SK-N-SH (cell line): ENCODE measurements at regions of chr5 and their contacts with region 1.

Region 1: DNA sequence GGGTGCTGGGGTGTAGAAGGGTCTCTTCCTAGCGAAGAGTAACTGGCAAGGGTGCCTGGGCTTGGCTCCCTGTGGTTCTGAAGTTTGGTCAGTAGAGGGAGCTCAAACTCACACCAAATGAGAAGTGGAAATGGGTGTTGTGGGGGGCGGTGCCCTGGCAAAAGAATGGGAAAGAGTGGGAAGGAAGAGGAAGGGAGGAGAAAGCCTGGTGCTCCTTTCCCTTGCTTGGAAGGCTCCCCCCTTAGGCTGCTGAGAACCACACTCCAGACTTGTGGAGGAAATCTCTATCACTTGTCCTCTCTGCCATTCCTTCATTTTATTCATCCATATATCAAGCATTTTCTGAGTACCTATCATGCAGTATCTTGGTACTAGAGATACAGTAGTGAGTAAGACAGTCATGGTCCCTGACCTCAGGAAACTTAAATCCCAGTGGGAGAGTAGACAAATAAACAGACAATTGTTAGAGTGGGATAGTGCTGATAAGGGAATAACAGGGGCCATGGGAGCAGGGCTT is 13.0 kb downstream of the SLC4A9 start:
- DNase-seq: peak; percentile 79
- H3K4me3 ChIP-seq: no peak overlapping the region; a peak in 1 of 4 replicates
- H3K27ac ChIP-seq: no peak overlapping the region
- H3K4me1 ChIP-seq: no peaks in the 10 kb centered on the region; a peak in 1 of 4 replicates
- H3K27me3 ChIP-seq: no peaks in the 10 kb centered on the region
- CTCF ChIP-seq: peak; percentile 78
- EP300 ChIP-seq: no peak
- RAD21 ChIP-seq: peak; percentile 83

Region 2: DNA sequence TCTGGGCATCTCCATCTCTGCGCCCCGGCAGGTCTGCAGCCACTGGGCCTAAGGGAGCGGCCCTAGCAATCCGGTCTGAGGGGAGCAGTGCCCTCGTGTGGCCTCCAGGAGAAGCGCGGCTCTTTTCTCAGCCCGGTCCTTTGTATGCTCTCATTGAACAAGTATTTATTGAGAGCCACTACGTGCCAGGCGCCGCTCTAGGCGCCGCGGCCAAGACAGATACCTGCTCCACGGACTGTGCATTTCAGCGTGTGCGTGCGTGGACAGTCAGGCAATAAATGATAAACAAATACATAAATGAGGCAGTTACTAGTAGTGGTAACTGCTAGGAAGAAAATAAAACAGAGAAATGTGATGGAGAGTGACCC is 15.3 kb before region 1 on chr5:
- CTCF ChIA-PET with region 1: interaction called, 21 read pairs
- POLR2A ChIA-PET with region 1: no interaction called
- DNase-seq: peak; percentile 92
- H3K4me3 ChIP-seq: peak overlapping the region in 1 of 2 experiments; percentile 9; a peak in 2 of 4 replicates
- H3K27ac ChIP-seq: no peak overlapping the region
- H3K4me1 ChIP-seq: peaks cover 0 to 4% of the 10 kb centered on the region in 2 experiments; a peak in 1 of 4 replicates
- H3K27me3 ChIP-seq: no peaks in the 10 kb centered on the region
- CTCF ChIP-seq: peak; percentile 91
- EP300 ChIP-seq: no peak
- RAD21 ChIP-seq: peak; percentile 77

Region 3: GRCh38 chr5:140388052-140388451 is 15.0 kb after region 1 on chr5:
- CTCF ChIA-PET with region 1: interaction called, 14 read pairs
- POLR2A ChIA-PET with region 1: interaction called, 3 read pairs
- DNase-seq: no peak
- H3K4me3 ChIP-seq: no peak overlapping the region
- H3K27ac ChIP-seq: no peak overlapping the region
- H3K4me1 ChIP-seq: no peaks in the 10 kb centered on the region
- H3K27me3 ChIP-seq: no peaks in the 10 kb centered on the region
- CTCF ChIP-seq: no peak
- EP300 ChIP-seq: no peak
- RAD21 ChIP-seq: no peak

Region 4: DNA sequence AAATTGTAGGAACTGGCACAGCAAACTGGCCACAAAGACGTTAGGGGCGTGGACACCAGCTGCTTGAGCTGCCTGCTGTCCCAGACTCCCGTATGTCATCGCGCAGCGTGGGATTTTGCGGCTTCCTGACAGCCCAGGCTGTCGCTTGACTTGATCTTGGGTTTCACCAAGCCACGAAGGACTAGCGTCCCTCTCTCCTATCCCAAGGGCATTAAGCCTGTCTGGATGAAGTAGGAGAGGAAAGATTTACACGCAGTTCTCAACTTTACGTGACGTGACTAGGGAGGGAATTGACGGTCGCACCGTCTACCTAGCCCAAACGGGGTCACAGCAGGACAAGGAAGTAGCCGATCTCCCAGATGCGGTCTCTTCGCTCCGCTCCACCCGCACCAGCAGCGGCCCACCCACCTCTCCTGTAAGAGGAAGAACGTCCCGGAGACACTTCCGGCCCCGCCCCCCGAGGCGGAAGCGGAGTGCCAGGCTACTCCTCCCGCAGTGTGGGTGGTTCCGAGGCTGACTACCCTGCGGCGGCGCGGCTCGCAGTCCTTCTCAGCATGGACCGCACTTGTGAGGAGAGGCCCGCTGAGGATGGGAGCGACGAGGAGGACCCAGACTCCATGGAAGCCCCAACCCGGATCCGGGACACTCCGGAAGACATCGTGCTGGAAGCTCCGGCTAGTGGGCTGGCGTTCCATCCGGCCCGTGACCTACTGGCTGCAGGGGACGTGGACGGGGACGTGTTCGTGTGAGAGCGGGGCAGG is 291.5 kb after region 1 on chr5 and contains the start of gene WDR55:
- CTCF ChIA-PET with region 1: interaction called, 10 read pairs
- POLR2A ChIA-PET with region 1: no interaction called
- DNase-seq: peak; percentile 96
- H3K4me3 ChIP-seq: peak within 1 kb of the TSS; percentile 78 to 88
- H3K27ac ChIP-seq: peak within 1 kb of the TSS; percentile 89 to 94
- H3K4me1 ChIP-seq: peaks cover 0 to 4% of the 10 kb centered on the region in 2 experiments; a peak in 2 of 4 replicates
- H3K27me3 ChIP-seq: no peaks in the 10 kb centered on the region
- CTCF ChIP-seq: no peak
- EP300 ChIP-seq: no peak
- RAD21 ChIP-seq: no peak
- polyA plus RNA-seq, gene WDR55: 28.3 and 32.7 TPM in 2 replicates

Region 5: GRCh38 chr5:140718241-140718580 is 345.2 kb after region 1 on chr5:
- CTCF ChIA-PET with region 1: interaction called, 20 read pairs
- POLR2A ChIA-PET with region 1: no interaction called
- DNase-seq: no peak
- H3K4me3 ChIP-seq: no peak overlapping the region
- H3K27ac ChIP-seq: peak overlapping the region in 1 of 2 experiments; percentile 39; a peak in 1 of 4 replicates
- H3K4me1 ChIP-seq: no peaks in the 10 kb centered on the region
- H3K27me3 ChIP-seq: no peaks in the 10 kb centered on the region
- CTCF ChIP-seq: no peak
- EP300 ChIP-seq: no peak
- RAD21 ChIP-seq: no peak